Naive thymus-derived CD4-positive, alpha-beta T cell (primary cell): ENCODE measurements at regions of chr12 and their contacts with region 1.

Region 1: DNA sequence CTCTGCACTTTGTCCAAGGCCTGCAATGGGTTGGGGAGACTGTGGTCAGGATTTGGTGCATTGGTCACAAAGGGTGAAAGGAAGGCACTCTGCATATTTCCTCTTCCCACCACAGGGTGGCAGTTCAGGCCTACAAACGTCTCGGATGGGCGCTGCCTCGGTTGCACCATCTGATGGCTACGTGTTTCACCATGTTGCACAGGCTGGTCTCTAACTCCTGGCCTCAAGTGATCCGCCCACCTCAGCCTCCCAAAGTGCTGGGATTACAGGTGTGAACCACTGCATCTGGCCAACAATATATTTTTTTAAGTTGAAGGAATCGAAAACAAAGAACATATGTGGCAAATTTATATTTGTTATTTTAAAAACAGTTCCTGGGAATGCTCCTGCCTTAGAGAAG is 35.1 kb downstream of the TMBIM6 start:
- DNase-seq: peak in 8 of 9 donors; percentile 21 to 52 (median 36)
- ATAC-seq: peak; percentile 85
- H3K4me3 ChIP-seq: no peak overlapping the region
- H3K4me3 Mint-ChIP-seq: peak overlapping the region in 2 of 10 donors; percentile 12 to 27
- H3K27ac ChIP-seq: no peak overlapping the region
- H3K27ac Mint-ChIP-seq: peak overlapping the region in 2 of 9 donors; percentile 25 to 56
- H3K4me1 ChIP-seq: peaks cover 0 to 8% of the 10 kb centered on the region in 2 donors
- H3K4me1 Mint-ChIP-seq: peaks cover 10 to 17% (median 13%) of the 10 kb centered on the region in 7 donors
- H3K27me3 ChIP-seq: peaks cover 0 to 8% of the 10 kb centered on the region in 2 donors
- H3K27me3 Mint-ChIP-seq: peaks cover 6 to 27% (median 20%) of the 10 kb centered on the region in 5 donors

Region 2: GRCh38 chr12:49644620-49644994 is 131.8 kb before region 1 on chr12:
- CTCF ChIA-PET with region 1: interaction called, 3 read pairs
- POLR2A ChIA-PET with region 1: no interaction called
- intact Hi-C with region 1: loop called (anchors 1 to 2 kb)
- DNase-seq: peak; percentile 71 to 86 (median 81)
- ATAC-seq: peak; percentile 96
- H3K4me3 ChIP-seq: no peak overlapping the region
- H3K4me3 Mint-ChIP-seq: peak overlapping the region in 9 of 10 donors; percentile 3 to 69 (median 41)
- H3K27ac ChIP-seq: peak overlapping the region; percentile 32
- H3K27ac Mint-ChIP-seq: peak overlapping the region; percentile 78 to 96 (median 89)
- H3K4me1 ChIP-seq: peaks cover 7 to 10% of the 10 kb centered on the region in 2 donors
- H3K4me1 Mint-ChIP-seq: peaks cover 25 to 56% (median 37%) of the 10 kb centered on the region in 7 donors
- H3K27me3 ChIP-seq: no peaks in the 10 kb centered on the region
- H3K27me3 Mint-ChIP-seq: no peaks in the 10 kb centered on the region

Region 3: DNA sequence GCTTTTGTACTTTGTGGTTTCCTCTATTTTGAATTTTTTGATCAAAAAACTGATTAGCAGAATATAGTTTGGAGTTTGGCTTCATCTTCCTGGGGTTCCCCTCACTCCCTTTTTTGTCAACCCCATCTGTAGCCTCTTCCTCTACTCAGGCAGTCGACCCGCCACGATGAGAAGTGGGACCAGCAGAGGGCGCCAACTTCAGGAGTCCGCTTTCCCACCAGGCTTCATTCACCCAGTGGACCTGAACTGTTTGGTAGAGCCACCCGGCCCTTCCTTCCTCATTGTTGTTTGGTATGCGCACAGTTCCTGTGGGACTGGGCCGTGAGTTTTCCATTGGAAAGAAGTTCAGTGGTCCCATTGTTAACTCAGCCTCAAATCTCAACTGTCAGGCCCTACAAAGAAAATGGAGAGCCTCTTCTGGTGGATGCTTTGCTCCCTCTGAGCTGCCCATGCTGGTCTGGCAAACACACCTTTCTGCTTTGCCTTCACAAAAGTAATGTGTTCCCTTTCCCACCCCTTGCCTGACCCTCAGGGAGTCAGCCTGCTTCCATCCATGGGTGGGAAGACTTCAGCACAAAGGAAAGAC is 13.3 kb before region 1 on chr12:
- CTCF ChIA-PET with region 1: interaction called, 7 read pairs
- POLR2A ChIA-PET with region 1: interaction called, 4 read pairs
- intact Hi-C with region 1: loop called in 1 of 2 experiments (anchors 1 kb)
- DNase-seq: peak; percentile 61 to 77 (median 68)
- ATAC-seq: peak; percentile 92
- H3K4me3 ChIP-seq: no peak overlapping the region
- H3K4me3 Mint-ChIP-seq: peak overlapping the region; percentile 29 to 78 (median 54)
- H3K27ac ChIP-seq: peak overlapping the region; percentile 57
- H3K27ac Mint-ChIP-seq: peak overlapping the region; percentile 76 to 93 (median 84)
- H3K4me1 ChIP-seq: peaks cover 25 to 43% of the 10 kb centered on the region in 2 donors
- H3K4me1 Mint-ChIP-seq: peaks cover 42 to 65% (median 60%) of the 10 kb centered on the region in 7 donors
- H3K27me3 ChIP-seq: no peaks in the 10 kb centered on the region
- H3K27me3 Mint-ChIP-seq: no peaks in the 10 kb centered on the region

Region 4: GRCh38 chr12:49807991-49808580 is 31.7 kb after region 1 on chr12:
- CTCF ChIA-PET with region 1: no interaction called
- POLR2A ChIA-PET with region 1: no interaction called
- intact Hi-C with region 1: no loop called
- DNase-seq: no peak
- ATAC-seq: no peak
- H3K4me3 ChIP-seq: no peak overlapping the region
- H3K4me3 Mint-ChIP-seq: no peak overlapping the region
- H3K27ac ChIP-seq: no peak overlapping the region
- H3K27ac Mint-ChIP-seq: peak overlapping the region in 1 of 9 donors; percentile 28
- H3K4me1 ChIP-seq: no peaks in the 10 kb centered on the region
- H3K4me1 Mint-ChIP-seq: peaks cover 0 to 8% (median 4%) of the 10 kb centered on the region in 7 donors
- H3K27me3 ChIP-seq: no peaks in the 10 kb centered on the region
- H3K27me3 Mint-ChIP-seq: no peaks in the 10 kb centered on the region

Region 5: DNA sequence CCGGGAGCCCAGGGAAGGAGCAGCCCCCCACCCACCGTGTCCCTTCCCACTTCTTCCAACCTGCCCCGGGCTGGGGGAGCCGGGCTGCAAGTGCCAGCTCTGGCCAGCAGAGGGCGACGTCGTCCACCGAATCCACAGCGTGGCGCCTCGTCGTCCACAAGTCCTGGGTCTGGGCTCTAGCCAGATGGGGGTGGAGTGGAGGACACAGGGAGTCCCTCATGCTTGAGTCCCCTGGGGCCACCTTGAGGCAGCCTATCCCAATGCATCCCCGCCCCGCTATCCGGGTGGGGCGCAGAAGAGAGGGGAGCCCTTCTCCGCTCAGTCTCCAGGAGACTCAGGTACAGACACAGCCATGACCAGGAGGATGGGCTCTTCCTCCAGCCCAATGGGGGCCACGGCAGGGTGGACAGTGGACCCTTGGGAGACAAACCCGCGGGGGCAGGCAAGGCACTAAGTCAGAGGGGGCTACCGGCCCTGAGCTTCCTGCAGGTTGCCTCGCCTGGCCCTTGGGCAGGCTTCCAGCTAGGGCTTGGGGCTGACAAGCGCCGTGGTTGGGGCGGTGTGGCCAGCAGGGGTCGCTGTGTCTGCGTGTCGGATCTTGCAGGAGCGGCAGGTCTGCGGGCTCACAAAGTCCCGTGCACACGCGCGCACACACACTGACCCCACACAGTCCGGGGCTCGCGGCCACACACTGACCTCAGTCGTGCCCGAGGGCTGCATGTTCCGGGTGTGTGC is 190.8 kb after region 1 on chr12:
- CTCF ChIA-PET with region 1: no interaction called
- POLR2A ChIA-PET with region 1: no interaction called
- intact Hi-C with region 1: loop called in 1 of 2 experiments (anchors 2 kb)
- DNase-seq: peak; percentile 81 to 98 (median 93)
- ATAC-seq: peak; percentile 93
- H3K4me3 ChIP-seq: peak overlapping the region; percentile 81
- H3K4me3 Mint-ChIP-seq: peak overlapping the region; percentile 70 to 83 (median 80)
- H3K27ac ChIP-seq: no peak overlapping the region
- H3K27ac Mint-ChIP-seq: peak overlapping the region in 1 of 9 donors; percentile 14
- H3K4me1 ChIP-seq: peaks cover 0 to 9% of the 10 kb centered on the region in 2 donors
- H3K4me1 Mint-ChIP-seq: peaks cover 0 to 12% (median 4%) of the 10 kb centered on the region in 7 donors
- H3K27me3 ChIP-seq: no peaks in the 10 kb centered on the region
- H3K27me3 Mint-ChIP-seq: peaks cover 31 to 41% (median 35%) of the 10 kb centered on the region in 5 donors

Region 6: GRCh38 chr12:50174971-50175715 is 398.7 kb after region 1 on chr12:
- CTCF ChIA-PET with region 1: no interaction called
- POLR2A ChIA-PET with region 1: no interaction called
- intact Hi-C with region 1: no loop called
- DNase-seq: peak in 7 of 9 donors; percentile 25 to 67 (median 56)
- ATAC-seq: peak; percentile 63
- H3K4me3 ChIP-seq: no peak overlapping the region
- H3K4me3 Mint-ChIP-seq: no peak overlapping the region
- H3K27ac ChIP-seq: no peak overlapping the region
- H3K27ac Mint-ChIP-seq: peak overlapping the region in 5 of 9 donors; percentile 3 to 71 (median 32)
- H3K4me1 ChIP-seq: no peaks in the 10 kb centered on the region
- H3K4me1 Mint-ChIP-seq: peaks cover 0 to 5% (median 0%) of the 10 kb centered on the region in 7 donors
- H3K27me3 ChIP-seq: no peaks in the 10 kb centered on the region
- H3K27me3 Mint-ChIP-seq: no peaks in the 10 kb centered on the region